GM12878 (cell line): ENCODE measurements at regions of chr3 and their contacts with region 1.

Region 1: GRCh38 chr3:16928386-16929132 is 43.8 kb downstream of the PLCL2 start:
- DNase-seq: no peak
- ATAC-seq: peak; percentile 69
- H3K4me3 ChIP-seq: 0 out of 2 replicates have a peak overlapping the region, but pooled peaks have one; percentile 4
- H3K27ac ChIP-seq: peak overlapping the region; percentile 63
- H3K4me1 ChIP-seq: peaks cover 66% of the 10 kb centered on the region
- H3K27me3 ChIP-seq: no peaks in the 10 kb centered on the region
- CTCF ChIP-seq: no peak
- EP300 ChIP-seq: no peak
- POLR2A ChIP-seq: no peak
- RAD21 ChIP-seq: no peak

Region 2: GRCh38 chr3:16784936-16785335 is 143.6 kb before region 1 on chr3:
- CTCF ChIA-PET with region 1: no interaction called
- POLR2A ChIA-PET with region 1: no interaction called
- RAD21 ChIA-PET with region 1: no interaction called
- SMC1A ChIA-PET with region 1: no interaction called
- in situ Hi-C with region 1: no loop called
- intact Hi-C with region 1: no loop called
- DNase-seq: no peak
- ATAC-seq: no peak
- H3K4me3 ChIP-seq: no peak overlapping the region
- H3K27ac ChIP-seq: no peak overlapping the region
- H3K4me1 ChIP-seq: no peaks in the 10 kb centered on the region
- H3K27me3 ChIP-seq: 0 out of 4 replicates have a peak, but pooled peaks cover 0 to 1% of the 10 kb centered on the region in 2 experiments
- CTCF ChIP-seq: no peak
- EP300 ChIP-seq: no peak
- POLR2A ChIP-seq: no peak
- RAD21 ChIP-seq: no peak

Region 3: GRCh38 chr3:16828815-16829214 is 99.7 kb before region 1 on chr3:
- CTCF ChIA-PET with region 1: interaction called, 10 read pairs
- POLR2A ChIA-PET with region 1: no interaction called
- RAD21 ChIA-PET with region 1: interaction called, 5 read pairs
- SMC1A ChIA-PET with region 1: interaction called, 8 read pairs
- in situ Hi-C with region 1: no loop called
- intact Hi-C with region 1: no loop called
- DNase-seq: no peak
- ATAC-seq: peak; percentile 90
- H3K4me3 ChIP-seq: no peak overlapping the region
- H3K27ac ChIP-seq: no peak overlapping the region
- H3K4me1 ChIP-seq: peaks cover 8% of the 10 kb centered on the region
- H3K27me3 ChIP-seq: no peaks in the 10 kb centered on the region
- CTCF ChIP-seq: peak; percentile 58 to 65 (median 60)
- EP300 ChIP-seq: no peak
- POLR2A ChIP-seq: no peak
- RAD21 ChIP-seq: peak; percentile 93

Region 4: DNA sequence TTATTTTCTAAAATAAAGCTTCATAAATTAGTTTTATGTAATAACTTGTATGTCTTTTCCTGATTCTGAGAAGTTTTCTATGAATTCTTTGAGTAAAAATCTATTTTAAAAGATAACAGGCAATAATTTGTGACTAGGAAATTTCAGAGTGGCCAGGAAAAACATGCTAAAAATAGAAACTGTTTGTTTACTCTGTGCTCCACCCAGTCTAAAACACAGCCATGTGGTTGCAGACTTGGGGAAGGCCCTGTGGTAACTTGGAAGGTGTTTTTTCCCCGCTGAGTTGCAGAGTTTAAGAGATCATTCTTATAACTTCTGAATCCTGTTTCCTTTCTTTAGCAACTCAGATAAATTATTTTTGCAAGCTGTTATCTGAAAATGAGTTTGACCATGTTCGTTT is 21.9 kb before region 1 on chr3:
- CTCF ChIA-PET with region 1: interaction called, 15 read pairs
- POLR2A ChIA-PET with region 1: interaction called, 3 read pairs
- RAD21 ChIA-PET with region 1: interaction called, 7 read pairs
- SMC1A ChIA-PET with region 1: interaction called, 18 read pairs
- in situ Hi-C with region 1: no loop called
- intact Hi-C with region 1: no loop called
- DNase-seq: no peak
- ATAC-seq: peak; percentile 62
- H3K4me3 ChIP-seq: no peak overlapping the region
- H3K27ac ChIP-seq: peak overlapping the region; percentile 63
- H3K4me1 ChIP-seq: peaks cover 50% of the 10 kb centered on the region
- H3K27me3 ChIP-seq: no peaks in the 10 kb centered on the region
- CTCF ChIP-seq: no peak
- EP300 ChIP-seq: no peak
- POLR2A ChIP-seq: no peak
- RAD21 ChIP-seq: no peak

Region 5: DNA sequence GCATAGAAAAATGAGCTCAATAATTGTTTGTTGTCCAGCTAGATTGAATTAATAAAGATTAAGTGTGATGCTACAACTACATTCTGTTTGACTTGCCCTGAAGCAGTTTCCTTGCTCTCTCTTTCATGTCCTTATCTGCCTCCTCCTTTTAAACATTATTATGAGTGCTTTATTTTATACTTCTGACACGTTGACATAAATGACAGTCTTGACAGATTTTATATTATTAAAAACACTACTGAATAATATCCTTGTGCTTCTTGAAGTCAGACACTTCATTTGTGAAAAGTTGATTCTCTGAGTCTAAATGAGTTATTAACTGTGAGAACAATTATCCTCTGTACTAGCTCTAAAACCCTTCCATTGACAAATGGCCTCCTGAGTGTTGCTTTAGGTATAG is 14.4 kb after region 1 on chr3:
- CTCF ChIA-PET with region 1: interaction called, 10 read pairs
- POLR2A ChIA-PET with region 1: no interaction called
- RAD21 ChIA-PET with region 1: interaction called, 5 read pairs
- SMC1A ChIA-PET with region 1: interaction called, 10 read pairs
- in situ Hi-C with region 1: no loop called
- intact Hi-C with region 1: no loop called
- DNase-seq: no peak
- ATAC-seq: 0 out of 3 replicates have a peak, but pooled peaks have one; percentile 36
- H3K4me3 ChIP-seq: no peak overlapping the region
- H3K27ac ChIP-seq: no peak overlapping the region
- H3K4me1 ChIP-seq: no peaks in the 10 kb centered on the region
- H3K27me3 ChIP-seq: no peaks in the 10 kb centered on the region
- CTCF ChIP-seq: no peak
- EP300 ChIP-seq: no peak
- POLR2A ChIP-seq: no peak
- RAD21 ChIP-seq: no peak

Region 6: DNA sequence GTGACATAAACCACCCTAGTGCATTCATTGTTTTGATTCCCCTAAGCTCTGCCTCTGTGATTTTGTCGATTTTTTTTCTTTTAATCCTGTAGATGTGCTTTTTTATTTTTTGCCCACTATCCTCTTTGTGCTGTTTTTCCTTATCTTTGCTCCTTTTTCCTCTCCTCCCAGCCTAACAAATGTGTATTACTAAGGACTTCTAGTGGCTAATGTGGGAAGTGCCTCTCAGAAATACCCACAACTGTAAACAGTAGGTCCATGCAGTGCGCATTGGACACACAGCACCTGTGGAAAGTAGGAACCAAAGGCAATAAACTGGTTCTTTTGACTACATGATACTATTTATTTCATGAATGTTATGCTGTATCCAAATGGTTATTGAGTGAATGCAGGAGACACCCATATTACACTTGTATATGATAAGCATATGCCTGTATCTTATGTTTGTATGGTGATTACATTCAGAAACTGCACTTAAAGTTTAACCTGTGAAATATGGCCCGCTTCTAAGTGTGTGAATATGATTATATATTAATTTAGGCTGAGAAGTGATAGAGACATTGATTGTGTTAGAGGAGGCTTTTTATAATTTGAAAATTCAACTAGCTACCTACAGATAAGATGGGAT is 104.0 kb after region 1 on chr3:
- CTCF ChIA-PET with region 1: interaction called, 22 read pairs
- POLR2A ChIA-PET with region 1: no interaction called
- RAD21 ChIA-PET with region 1: interaction called, 29 read pairs
- SMC1A ChIA-PET with region 1: interaction called, 14 read pairs
- in situ Hi-C with region 1: no loop called
- intact Hi-C with region 1: no loop called
- DNase-seq: no peak
- ATAC-seq: peak; percentile 81
- H3K4me3 ChIP-seq: no peak overlapping the region
- H3K27ac ChIP-seq: no peak overlapping the region
- H3K4me1 ChIP-seq: peaks cover 15% of the 10 kb centered on the region
- H3K27me3 ChIP-seq: no peaks in the 10 kb centered on the region
- CTCF ChIP-seq: peak; percentile 54 to 64 (median 54); a peak in 5 of 6 replicates
- EP300 ChIP-seq: no peak
- POLR2A ChIP-seq: no peak
- RAD21 ChIP-seq: peak; percentile 76

Region 7: GRCh38 chr3:17151598-17152373 is 223.2 kb after region 1 on chr3:
- CTCF ChIA-PET with region 1: interaction called, 3 read pairs
- POLR2A ChIA-PET with region 1: no interaction called
- RAD21 ChIA-PET with region 1: interaction called, 7 read pairs
- SMC1A ChIA-PET with region 1: interaction called, 10 read pairs
- in situ Hi-C with region 1: no loop called
- intact Hi-C with region 1: no loop called
- DNase-seq: peak; percentile 92
- ATAC-seq: peak; percentile 96
- H3K4me3 ChIP-seq: 0 out of 2 replicates have a peak overlapping the region, but pooled peaks have one; percentile 1
- H3K27ac ChIP-seq: peak overlapping the region; percentile 76
- H3K4me1 ChIP-seq: peaks cover 25% of the 10 kb centered on the region
- H3K27me3 ChIP-seq: no peaks in the 10 kb centered on the region
- CTCF ChIP-seq: 0 out of 6 replicates have a peak, but pooled peaks of 1 of the 3 experiments have one; percentile 1
- EP300 ChIP-seq: peak; percentile 73 to 82
- POLR2A ChIP-seq: peak; percentile 67; the same call in 1 of the 2 replicates
- RAD21 ChIP-seq: peak; percentile 32